Tibial artery (tissue), 4 donors: ENCODE measurements at regions of chr15 and their contacts with region 1.

Region 1: DNA sequence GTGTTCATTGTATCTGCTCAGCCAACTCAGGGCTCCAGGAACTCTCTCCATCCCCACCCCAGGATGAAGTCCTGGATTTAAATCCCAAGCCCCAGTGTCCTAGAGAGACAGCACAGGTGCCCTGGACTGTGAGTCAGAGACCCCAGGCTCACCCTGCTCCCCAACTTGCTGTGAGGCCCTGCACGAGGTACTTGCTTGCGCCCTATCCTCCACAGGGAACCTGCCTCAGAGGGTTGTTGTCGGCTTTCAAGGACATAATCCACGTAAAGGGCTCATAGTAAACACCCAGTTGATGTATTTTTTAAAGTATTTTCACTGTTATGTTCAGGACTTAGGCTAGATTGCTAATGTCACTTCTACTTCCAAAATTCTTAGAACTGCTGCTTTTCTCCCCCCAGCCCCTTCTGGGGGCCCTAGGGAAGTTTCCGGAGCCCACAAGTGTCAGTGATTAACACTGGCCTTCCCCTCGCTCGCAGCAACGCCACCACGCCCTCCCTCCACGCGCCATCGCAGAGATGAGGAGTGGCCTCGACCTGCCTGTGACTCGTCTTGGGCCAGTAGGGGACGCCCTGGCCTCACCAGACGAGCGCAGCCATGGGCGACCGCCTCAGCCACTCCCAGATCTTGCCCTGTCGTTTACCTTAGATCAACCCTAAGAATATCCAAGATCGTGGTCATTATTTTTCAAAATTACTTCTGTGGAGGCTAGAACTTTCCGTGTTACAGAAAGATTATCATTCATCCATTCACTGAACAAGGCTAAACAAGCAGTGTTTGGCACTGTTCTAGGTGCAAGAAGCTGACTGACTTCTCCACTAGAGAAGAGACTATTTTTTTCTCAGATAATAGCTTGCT is 6.0 kb upstream of the SRP14 start:
- DNase-seq: peak; percentile 89 to 91
- H3K4me3 ChIP-seq: peak overlapping the region in 1 of 2 donors; percentile 26
- H3K27ac ChIP-seq: no peak overlapping the region
- H3K4me1 ChIP-seq: peaks cover 0 to 22% (median 9%) of the 10 kb centered on the region in 4 donors
- H3K27me3 ChIP-seq: no peaks in the 10 kb centered on the region
- CTCF ChIP-seq: peak; percentile 91 to 93

Region 2: GRCh38 chr15:39782441-39783138 is 262.4 kb before region 1 on chr15 and contains the start of gene FSIP1:
- intact Hi-C with region 1: loop called (anchors 10 kb)
- DNase-seq: peak; percentile 97 to 98
- H3K4me3 ChIP-seq: peak within 1 kb of the TSS; percentile 67 to 77
- H3K27ac ChIP-seq: peak within 1 kb of the TSS; percentile 63 to 67
- H3K4me1 ChIP-seq: peaks cover 0 to 18% (median 12%) of the 10 kb centered on the region in 4 donors
- H3K27me3 ChIP-seq: no peaks in the 10 kb centered on the region
- CTCF ChIP-seq: no peak

Region 3: DNA sequence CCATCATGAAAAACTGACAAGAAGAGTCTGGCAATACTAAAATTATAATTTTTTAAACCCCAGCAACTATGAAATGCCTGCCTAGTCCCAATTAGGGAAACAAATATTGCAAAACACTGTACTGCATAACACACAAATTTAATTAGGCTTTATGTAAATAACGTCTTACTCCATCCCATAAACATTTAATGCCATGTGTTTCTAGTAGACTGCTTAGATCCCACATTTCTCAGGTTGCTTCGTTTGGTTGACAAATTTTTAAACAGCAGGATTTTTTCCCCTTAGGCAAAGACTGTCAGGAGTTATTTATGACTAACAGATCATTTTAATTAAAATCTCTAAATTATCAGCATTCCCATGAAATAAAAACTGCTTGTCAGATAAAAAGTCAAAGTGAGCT is 81.2 kb before region 1 on chr15:
- intact Hi-C with region 1: no loop called
- DNase-seq: no peak
- H3K4me3 ChIP-seq: no peak overlapping the region
- H3K27ac ChIP-seq: no peak overlapping the region
- H3K4me1 ChIP-seq: no peaks in the 10 kb centered on the region
- H3K27me3 ChIP-seq: no peaks in the 10 kb centered on the region
- CTCF ChIP-seq: no peak

Region 4: DNA sequence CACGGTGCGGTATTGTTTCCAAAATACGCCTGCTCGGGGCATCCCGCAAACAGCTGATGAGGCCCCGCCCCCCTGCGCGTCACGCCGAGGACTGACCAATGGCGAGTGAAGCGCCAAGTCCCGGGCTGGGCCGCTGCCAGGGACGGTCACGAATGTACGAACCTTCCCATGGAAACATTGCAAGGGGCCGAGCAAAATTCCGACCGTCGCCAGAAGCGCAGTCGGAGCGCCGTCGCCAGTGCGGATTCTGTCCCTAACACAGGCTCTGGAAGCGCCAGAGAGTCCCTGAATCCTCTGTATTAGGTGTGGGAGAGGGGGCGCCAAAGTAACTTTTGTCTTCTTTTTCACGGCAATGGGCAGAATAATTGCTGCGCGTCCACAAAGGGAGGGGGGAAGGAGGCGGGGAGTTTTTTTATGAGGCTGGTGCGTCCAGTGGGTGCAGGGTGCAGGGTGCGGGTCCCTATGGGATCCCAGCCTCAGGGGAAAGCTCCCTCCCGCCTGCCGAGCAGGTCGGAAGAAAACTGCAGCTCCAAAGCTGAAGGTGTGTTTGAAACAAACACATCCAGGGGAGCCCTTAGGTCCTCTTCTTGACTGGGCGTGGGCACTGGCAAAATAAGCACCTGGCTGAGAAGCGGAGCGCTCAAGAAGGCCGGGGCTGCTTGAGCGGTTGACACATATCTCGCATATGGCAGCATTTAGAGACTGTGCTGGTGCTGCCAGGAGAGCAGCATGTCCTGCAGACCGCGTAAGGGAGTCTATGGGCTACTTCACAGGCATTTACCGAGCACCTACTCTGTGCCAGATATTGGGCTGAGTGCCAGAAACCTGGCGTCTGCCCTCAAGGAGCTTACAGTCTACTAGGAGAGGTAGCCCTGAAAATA is 64.2 kb after region 1 on chr15 and contains the start of gene BMF:
- intact Hi-C with region 1: loop called (anchors 10 kb)
- DNase-seq: peak; percentile 100
- H3K4me3 ChIP-seq: peak within 1 kb of the TSS; percentile 72 to 91
- H3K27ac ChIP-seq: peak within 1 kb of the TSS; percentile 77 to 79
- H3K4me1 ChIP-seq: peaks cover 0 to 50% (median 34%) of the 10 kb centered on the region in 4 donors
- H3K27me3 ChIP-seq: peaks cover 0 to 6% of the 10 kb centered on the region in 2 donors
- CTCF ChIP-seq: peak in 1 of 2 experiments; percentile 14

Region 5: DNA sequence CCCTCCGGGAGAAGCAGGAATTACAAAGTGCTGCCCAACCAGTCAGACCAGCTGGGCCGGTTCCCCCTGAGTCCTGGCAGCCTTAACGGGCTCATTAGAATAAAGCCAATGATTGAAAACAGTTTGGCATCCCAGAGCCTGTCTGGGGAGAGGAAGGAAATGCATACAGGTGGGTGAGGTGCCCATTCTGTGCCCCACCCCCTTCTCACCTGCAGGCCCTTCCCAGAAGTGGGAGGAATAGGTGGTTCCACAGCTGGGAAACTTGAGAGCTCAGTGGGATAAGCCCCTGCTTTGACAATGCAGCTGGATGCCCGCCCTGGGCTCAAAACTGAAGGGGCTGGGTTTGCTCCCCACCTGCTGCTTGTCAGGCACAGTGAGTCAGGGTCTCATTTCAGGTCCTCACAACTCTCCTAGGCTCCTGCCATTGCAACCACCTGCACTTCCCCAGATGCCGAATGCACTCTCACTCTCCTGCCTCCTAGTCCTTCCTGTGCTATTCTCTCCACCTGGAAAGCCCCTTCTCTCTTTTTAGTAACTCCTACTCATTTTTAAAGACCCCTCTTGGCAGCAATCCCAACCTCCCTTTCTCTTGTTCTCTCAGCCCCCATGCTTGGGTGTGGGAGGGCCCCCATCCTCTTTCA is 110.4 kb after region 1 on chr15:
- intact Hi-C with region 1: loop called (anchors 5 kb)
- DNase-seq: no peak
- H3K4me3 ChIP-seq: no peak overlapping the region
- H3K27ac ChIP-seq: no peak overlapping the region
- H3K4me1 ChIP-seq: peaks cover 0 to 9% (median 1%) of the 10 kb centered on the region in 4 donors
- H3K27me3 ChIP-seq: peaks cover 0 to 3% of the 10 kb centered on the region in 2 donors
- CTCF ChIP-seq: no peak

Region 6: GRCh38 chr15:40274350-40275274 is 229.7 kb after region 1 on chr15:
- intact Hi-C with region 1: loop called (anchors 5 kb)
- DNase-seq: peak; percentile 69 to 83
- H3K4me3 ChIP-seq: no peak overlapping the region
- H3K27ac ChIP-seq: no peak overlapping the region
- H3K4me1 ChIP-seq: peaks cover 0 to 9% (median 2%) of the 10 kb centered on the region in 4 donors
- H3K27me3 ChIP-seq: peaks cover 0 to 35% of the 10 kb centered on the region in 2 donors
- CTCF ChIP-seq: peak; percentile 100

Region 7: GRCh38 chr15:40440743-40441564 is 396.0 kb after region 1 on chr15 and contains the start of gene BAHD1:
- intact Hi-C with region 1: loop called (anchors 10 kb)
- DNase-seq: peak; percentile 95 to 99
- H3K4me3 ChIP-seq: peak within 1 kb of the TSS; percentile 88 to 99
- H3K27ac ChIP-seq: peak within 1 kb of the TSS; percentile 74 to 81
- H3K4me1 ChIP-seq: peaks cover 0 to 69% (median 44%) of the 10 kb centered on the region in 4 donors
- H3K27me3 ChIP-seq: peaks cover 0 to 39% of the 10 kb centered on the region in 2 donors
- CTCF ChIP-seq: peak in 1 of 2 experiments; percentile 17

Region 8: DNA sequence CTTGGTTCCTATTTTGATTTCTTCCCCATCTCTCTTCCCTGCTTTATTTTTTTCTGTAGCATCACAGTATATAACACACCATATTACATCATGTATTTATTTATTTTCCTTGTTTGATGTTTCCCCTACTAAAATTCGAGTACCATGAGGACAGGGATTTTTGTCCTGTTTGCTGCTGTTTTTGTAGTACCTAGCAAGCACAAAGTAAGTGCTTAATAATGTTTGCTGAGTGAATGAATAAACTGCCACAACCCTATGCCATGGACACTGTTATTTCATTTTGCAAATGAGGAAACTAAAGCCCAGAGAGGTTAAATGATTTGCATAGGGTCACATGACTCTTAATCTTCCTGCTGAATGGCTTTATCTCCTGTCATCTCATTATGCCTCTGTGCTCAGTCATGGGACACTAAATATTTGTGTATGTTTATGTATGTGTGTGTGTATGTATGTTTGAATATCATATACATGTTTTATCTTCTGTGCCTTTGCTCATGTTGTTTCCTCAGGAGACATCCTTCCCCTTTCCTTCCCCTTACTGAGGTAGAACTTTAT is 1589.2 kb after region 1 on chr15:
- intact Hi-C with region 1: no loop called
- DNase-seq: no peak
- H3K4me3 ChIP-seq: no peak overlapping the region
- H3K27ac ChIP-seq: no peak overlapping the region
- H3K4me1 ChIP-seq: no peaks in the 10 kb centered on the region
- H3K27me3 ChIP-seq: no peaks in the 10 kb centered on the region
- CTCF ChIP-seq: no peak